Activated CD4-positive, alpha-beta T cell treated with anti-CD3 and anti-CD28 coated beads, Interleukin-2, amount 10 ng/mL, durations not matched to agents 24 days and 14 days (primary cell): ENCODE measurements at regions of chr5 and their contacts with region 1.

Region 1: DNA sequence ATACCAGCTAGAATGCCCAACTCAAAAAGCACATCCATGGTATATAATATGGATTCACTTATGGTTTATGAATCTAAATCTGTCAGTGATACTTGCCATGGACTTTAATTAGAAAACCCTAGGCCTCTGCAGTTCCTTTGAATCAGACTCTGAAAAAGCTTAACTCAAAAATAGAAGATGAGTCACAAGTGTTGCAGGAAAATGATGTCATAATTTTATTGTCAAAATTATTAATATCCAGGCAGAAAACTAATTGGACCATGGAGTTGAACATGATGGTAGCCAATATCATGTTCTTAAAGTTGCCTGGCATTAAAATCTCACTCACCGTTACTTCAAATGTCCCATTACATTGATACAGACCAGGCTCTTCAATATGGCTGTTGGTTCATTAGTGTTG is 110.2 kb upstream of the PPP1R2B start:
- DNase-seq: no peak
- H3K4me3 Mint-ChIP-seq: no peak overlapping the region
- H3K27ac Mint-ChIP-seq: no peak overlapping the region
- H3K4me1 Mint-ChIP-seq: peaks cover 2% of the 10 kb centered on the region
- H3K27me3 Mint-ChIP-seq: peaks cover 5% of the 10 kb centered on the region

Region 2: DNA sequence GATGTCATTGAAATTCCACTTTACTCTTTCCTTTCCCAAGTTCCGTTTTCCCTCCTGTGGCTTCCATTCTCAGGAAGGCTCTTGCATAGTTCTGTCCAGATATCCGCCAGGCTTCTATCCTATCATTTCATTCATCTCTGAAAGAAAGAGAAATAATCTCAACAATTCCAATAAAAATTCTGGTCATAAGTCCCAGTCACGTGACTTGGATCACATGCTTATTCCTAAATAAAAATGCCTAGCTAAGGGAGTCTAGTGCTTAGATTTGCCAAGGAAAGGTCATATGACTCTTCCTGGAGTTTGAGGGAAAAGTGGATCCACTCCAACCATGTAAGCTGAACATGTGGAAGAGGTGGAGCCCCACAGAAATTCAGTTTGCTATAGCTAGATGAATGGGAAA is 35.7 kb before region 1 on chr5:
- intact Hi-C with region 1: no loop called
- DNase-seq: no peak
- H3K4me3 Mint-ChIP-seq: no peak overlapping the region
- H3K27ac Mint-ChIP-seq: no peak overlapping the region
- H3K4me1 Mint-ChIP-seq: no peaks in the 10 kb centered on the region
- H3K27me3 Mint-ChIP-seq: peaks cover 28% of the 10 kb centered on the region

Region 3: DNA sequence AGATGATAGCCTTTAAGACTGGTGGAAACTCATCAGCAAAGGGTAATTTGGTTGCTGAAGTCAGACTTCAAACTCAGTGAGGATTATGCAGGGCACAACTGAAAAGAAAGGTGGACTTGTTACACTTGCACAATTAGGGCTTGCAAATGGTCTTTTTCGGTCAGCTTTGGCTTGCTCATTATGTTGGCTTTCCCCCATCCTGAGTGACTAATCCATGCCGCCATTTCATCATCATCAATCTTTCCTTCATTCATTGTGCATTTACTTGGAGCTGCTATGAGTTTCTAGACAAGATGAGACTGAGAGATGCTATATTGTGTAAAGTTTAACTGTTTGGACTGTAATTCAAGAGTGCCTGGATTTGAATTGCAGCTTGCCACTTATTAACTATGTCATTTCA is 24.6 kb before region 1 on chr5:
- intact Hi-C with region 1: loop called (anchors 1 kb)
- DNase-seq: no peak
- H3K4me3 Mint-ChIP-seq: no peak overlapping the region
- H3K27ac Mint-ChIP-seq: no peak overlapping the region
- H3K4me1 Mint-ChIP-seq: no peaks in the 10 kb centered on the region
- H3K27me3 Mint-ChIP-seq: peaks cover 22% of the 10 kb centered on the region